Aorta (tissue), 5 donors: ENCODE measurements at regions of chr6 and their contacts with region 1.

Region 1: DNA sequence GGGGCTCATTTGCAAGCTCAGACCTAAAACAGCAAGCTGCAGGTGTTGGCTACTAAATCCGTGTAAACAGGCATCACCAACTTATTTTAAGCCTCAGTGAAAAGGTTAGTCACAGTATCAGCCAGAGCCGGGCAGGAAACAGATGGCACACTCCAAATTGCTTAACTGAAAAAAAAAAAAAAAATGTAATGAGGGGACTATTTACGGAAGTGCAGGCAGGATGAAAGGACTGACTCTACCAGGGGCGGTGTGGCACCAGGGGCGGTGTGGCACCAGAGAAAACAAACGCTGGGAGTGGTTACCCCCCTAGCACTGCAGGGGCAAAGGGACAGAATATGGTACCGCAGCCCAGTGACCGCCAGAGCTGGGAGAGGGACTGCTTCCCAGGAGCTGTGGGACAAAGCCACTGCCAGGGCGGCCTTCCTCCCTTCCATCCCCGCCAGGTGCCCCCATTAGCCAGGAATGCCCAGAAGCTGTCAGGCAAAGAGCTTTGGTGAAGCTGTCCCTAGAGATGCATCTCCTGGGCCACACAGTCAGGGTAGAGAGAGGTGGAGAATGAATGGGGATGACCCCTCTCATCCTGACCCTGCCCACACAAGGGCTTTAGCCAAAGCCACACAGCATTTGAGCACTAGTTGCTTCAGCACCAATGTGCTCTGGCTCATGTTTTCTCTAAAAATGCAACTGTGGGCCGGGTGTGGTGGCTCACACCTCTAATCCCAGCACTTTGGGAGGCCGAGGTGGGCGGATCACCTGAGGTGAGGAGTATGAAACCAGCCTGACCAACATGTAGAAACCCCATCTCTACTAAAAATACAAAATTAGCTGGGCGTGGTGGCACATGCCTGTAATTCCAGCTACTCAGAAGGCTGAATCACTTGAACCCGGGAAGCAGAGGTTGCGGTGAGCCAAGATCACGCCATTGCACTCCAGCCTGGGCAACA is 39.6 kb upstream of the GFOD1 start:
- DNase-seq: peak in 1 of 2 donors; percentile 64
- ATAC-seq: peak; percentile 67
- H3K4me3 ChIP-seq: no peak overlapping the region
- H3K27ac ChIP-seq: no peak overlapping the region
- H3K4me1 ChIP-seq: no peaks in the 10 kb centered on the region
- H3K27me3 ChIP-seq: no peaks in the 10 kb centered on the region

Region 2: GRCh38 chr6:12947151-12947871 is 579.7 kb before region 1 on chr6:
- intact Hi-C with region 1: loop called in 1 of 2 experiments (anchors 5 kb)
- DNase-seq: no peak
- ATAC-seq: no peak
- H3K4me3 ChIP-seq: no peak overlapping the region
- H3K27ac ChIP-seq: no peak overlapping the region
- H3K4me1 ChIP-seq: no peaks in the 10 kb centered on the region
- H3K27me3 ChIP-seq: no peaks in the 10 kb centered on the region

Region 3: DNA sequence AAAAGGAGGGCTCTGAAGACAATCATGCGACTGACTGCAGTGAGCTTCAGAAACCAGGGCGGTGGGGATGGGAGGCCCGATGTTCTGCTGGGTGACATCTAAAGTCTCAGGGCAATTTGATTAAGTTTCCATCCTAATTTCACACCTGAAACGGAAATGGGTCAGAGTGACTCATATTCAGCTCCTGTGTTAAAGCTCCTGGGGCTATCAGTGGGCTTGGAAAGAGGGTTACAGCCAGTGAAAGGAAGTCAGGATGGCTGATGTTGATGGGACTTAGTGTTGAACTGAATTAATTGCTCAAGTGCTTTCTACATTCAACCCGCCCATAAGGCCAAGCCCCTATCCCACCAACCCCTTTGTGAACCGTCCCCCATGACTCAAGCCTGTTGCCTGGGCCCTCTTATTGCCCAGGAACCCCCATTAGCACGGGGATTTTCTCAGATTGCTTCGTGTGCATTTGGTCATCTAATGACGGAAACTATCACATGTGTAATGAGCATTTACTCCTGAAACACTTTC is 151.6 kb before region 1 on chr6:
- intact Hi-C with region 1: loop called in 1 of 2 experiments (anchors 10 kb)
- DNase-seq: no peak
- ATAC-seq: no peak
- H3K4me3 ChIP-seq: no peak overlapping the region
- H3K27ac ChIP-seq: no peak overlapping the region
- H3K4me1 ChIP-seq: no peaks in the 10 kb centered on the region
- H3K27me3 ChIP-seq: no peaks in the 10 kb centered on the region